Activated CD4-positive, alpha-beta T cell treated with anti-CD3 and anti-CD28 coated beads for 36 hours (primary cell): ENCODE measurements at regions of chr11 and their contacts with region 1.

Region 1: DNA sequence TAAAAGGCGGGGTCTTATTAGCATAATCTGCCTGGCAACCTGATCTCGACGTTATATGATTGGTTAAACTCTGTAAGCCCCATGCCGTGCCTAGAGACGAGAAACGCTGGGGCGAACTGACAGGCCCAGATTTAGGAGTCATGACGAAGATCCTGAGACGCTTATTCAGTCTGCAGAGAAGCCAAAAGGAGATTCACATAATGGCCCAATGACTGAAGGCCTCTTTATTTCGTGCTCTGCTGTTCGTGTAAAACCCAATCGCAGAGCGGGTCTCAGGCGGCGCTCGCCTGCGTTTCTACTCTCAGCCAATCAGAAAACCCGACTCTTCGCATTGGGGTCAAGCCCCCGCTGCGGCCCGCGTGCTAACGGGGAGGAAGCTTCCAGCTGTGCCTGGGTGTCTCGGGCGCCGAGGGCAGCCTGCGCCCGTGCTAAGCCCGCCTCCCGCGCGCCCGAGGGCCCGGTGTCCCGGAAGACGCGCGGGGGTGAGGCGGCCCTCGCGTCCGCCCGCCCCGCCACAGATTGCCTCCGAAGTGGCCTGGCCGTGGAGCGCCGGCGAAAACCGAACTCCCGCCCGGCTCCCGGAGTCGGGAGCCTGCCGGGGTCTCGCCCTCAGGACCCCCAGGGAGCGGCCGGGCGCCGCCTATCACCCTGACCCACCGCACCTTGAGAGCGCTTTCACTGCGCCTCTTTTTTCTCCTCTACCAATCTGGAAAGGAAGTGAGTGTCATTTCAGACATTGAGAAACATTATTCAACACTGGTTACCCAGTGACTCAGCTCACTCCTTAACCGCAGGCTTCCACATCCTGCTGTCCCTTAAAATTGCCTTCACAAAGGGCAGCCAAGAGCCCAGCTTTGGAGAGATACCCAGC is 446 bp upstream of the PRDM10 start:
- DNase-seq: peak; percentile 91
- ATAC-seq: peak; percentile 82
- H3K4me3 Mint-ChIP-seq: peak overlapping the region; percentile 90
- H3K27ac Mint-ChIP-seq: peak overlapping the region; percentile 100
- H3K4me1 Mint-ChIP-seq: peaks cover 32% of the 10 kb centered on the region
- H3K27me3 Mint-ChIP-seq: no peaks in the 10 kb centered on the region

Region 2: DNA sequence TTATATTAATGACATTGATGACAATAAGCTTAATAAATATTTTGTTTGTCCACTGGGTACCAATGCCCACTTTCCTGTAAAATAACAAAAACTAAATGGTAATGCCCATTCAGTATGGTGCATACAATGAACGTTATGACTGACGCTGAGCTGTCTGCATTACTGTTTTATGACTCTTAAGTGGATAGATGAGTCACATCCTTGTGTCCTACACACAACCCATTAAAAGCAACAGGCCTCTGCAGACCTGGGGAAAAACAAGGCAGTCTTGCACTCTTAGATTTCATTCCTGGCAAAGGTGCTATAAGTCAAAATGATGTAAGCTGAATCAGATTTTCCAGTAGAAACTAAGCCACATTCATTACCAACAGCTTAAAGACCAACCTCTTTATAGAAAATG is 363.8 kb before region 1 on chr11:
- CTCF ChIA-PET with region 1: no interaction called
- POLR2A ChIA-PET with region 1: no interaction called
- intact Hi-C with region 1: loop called in 1 of 2 experiments (anchors 10 kb)
- DNase-seq: peak; percentile 66
- ATAC-seq: peak; percentile 81
- H3K4me3 Mint-ChIP-seq: no peak overlapping the region
- H3K27ac Mint-ChIP-seq: peak overlapping the region; percentile 72
- H3K4me1 Mint-ChIP-seq: peaks cover 75% of the 10 kb centered on the region
- H3K27me3 Mint-ChIP-seq: peaks cover 3% of the 10 kb centered on the region

Region 3: DNA sequence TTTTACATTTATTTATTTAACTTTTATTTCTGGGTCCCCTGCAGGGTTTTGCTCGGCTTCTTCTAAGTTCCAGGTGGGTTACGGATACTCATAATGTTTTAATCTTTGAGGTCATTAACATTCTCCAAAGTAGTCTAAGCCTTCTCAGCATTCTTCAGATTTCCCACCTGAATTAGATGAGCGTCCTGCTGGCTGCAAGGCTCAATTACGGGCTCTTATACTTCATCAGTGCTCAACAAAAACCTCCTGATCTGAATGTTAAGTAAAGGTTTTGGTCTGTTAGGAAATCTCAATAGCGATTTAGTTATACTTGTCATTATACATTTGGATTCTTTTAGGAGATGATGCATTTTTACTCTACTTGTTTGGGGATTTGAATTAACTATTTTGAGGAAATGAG is 80.4 kb before region 1 on chr11:
- CTCF ChIA-PET with region 1: interaction called, 4 read pairs
- POLR2A ChIA-PET with region 1: no interaction called
- intact Hi-C with region 1: loop called in 1 of 2 experiments (anchors 1 kb)
- DNase-seq: no peak
- ATAC-seq: no peak
- H3K4me3 Mint-ChIP-seq: no peak overlapping the region
- H3K27ac Mint-ChIP-seq: no peak overlapping the region
- H3K4me1 Mint-ChIP-seq: peaks cover 6% of the 10 kb centered on the region
- H3K27me3 Mint-ChIP-seq: no peaks in the 10 kb centered on the region

Region 4: DNA sequence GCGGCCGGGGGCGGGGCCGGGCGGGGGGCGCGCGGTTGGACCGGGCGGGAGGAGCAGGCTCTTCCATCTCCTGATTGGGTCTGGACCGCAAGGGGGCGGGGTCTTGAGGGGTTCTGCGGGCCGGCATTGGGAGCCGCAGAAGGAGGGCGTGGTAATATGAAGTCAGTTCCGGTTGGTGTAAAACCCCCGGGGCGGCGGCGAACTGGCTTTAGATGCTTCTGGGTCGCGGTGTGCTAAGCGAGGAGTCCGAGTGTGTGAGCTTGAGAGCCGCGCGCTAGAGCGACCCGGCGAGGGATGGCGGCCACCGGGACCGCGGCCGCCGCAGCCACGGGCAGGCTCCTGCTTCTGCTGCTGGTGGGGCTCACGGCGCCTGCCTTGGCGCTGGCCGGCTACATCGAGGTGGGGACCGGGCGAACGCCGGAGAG is 66.6 kb after region 1 on chr11 and contains the start of gene APLP2:
- CTCF ChIA-PET with region 1: no interaction called
- POLR2A ChIA-PET with region 1: no interaction called
- intact Hi-C with region 1: loop called (anchors 1 kb)
- DNase-seq: peak; percentile 99
- ATAC-seq: peak; percentile 96
- H3K4me3 Mint-ChIP-seq: peak within 1 kb of the TSS; percentile 84
- H3K27ac Mint-ChIP-seq: peak within 1 kb of the TSS; percentile 91
- H3K4me1 Mint-ChIP-seq: peaks cover 22% of the 10 kb centered on the region
- H3K27me3 Mint-ChIP-seq: peaks cover 6% of the 10 kb centered on the region
- total RNA-seq, gene APLP2: 34.6 to 40.2 TPM

Region 5: GRCh38 chr11:130314750-130315285 is 311.7 kb after region 1 on chr11 and contains the start of gene ZBTB44:
- CTCF ChIA-PET with region 1: no interaction called
- POLR2A ChIA-PET with region 1: no interaction called
- intact Hi-C with region 1: loop called (anchors 1 kb)
- DNase-seq: peak; percentile 96
- ATAC-seq: peak; percentile 78
- H3K4me3 Mint-ChIP-seq: peak within 1 kb of the TSS; percentile 83
- H3K27ac Mint-ChIP-seq: peak within 1 kb of the TSS; percentile 95
- H3K4me1 Mint-ChIP-seq: peaks cover 36% of the 10 kb centered on the region
- H3K27me3 Mint-ChIP-seq: no peaks in the 10 kb centered on the region
- total RNA-seq, gene ZBTB44: 38.2 to 49.4 TPM